ENCODE measurements at regions of chr10 and their contacts with region 1.

Region 1: GRCh38 chr10:92087750-92088395 is 164.3 kb downstream of the BTAF1 start:
- DNase-seq: peak; percentile 90
- ATAC-seq: peak; percentile 100
- H3K4me3 ChIP-seq: no peak overlapping the region
- H3K27ac ChIP-seq: no peak overlapping the region
- H3K4me1 ChIP-seq: peaks cover 20% of the 10 kb centered on the region
- H3K27me3 ChIP-seq: no peaks in the 10 kb centered on the region
- CTCF ChIP-seq: peak; percentile 94
- EP300 ChIP-seq: no peak; a peak in 1 of 4 replicates
- POLR2A ChIP-seq: no peak
- RAD21 ChIP-seq: peak; percentile 95

Region 2: DNA sequence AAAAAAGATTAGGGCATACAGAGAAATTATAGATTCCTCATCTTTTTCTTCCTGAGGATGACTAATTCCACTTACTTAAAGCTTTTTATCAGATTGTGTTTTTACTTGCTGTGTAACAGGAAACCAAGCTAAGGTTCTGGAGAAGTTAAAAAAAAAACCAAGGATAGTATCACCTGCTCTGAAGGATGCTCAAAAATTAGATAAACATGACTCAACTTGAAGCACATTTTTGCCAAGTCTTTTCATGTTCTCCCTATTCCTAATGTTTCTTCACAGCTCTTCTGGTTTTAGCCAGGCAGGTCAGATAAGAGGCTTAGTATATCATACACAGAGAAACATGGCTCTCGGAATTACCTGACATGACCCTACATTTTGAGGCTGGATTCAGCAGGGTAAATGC is 112.7 kb after region 1 on chr10:
- CTCF ChIA-PET with region 1: no interaction called
- POLR2A ChIA-PET with region 1: interaction called, 3 read pairs
- in situ Hi-C with region 1: no loop called
- intact Hi-C with region 1: loop called (anchors 10 kb)
- DNase-seq: no peak
- ATAC-seq: no peak
- H3K4me3 ChIP-seq: no peak overlapping the region
- H3K27ac ChIP-seq: no peak overlapping the region
- H3K4me1 ChIP-seq: 0 out of 2 replicates have a peak, but pooled peaks cover 6% of the 10 kb centered on the region
- H3K27me3 ChIP-seq: no peaks in the 10 kb centered on the region
- CTCF ChIP-seq: no peak
- EP300 ChIP-seq: no peak
- POLR2A ChIP-seq: no peak
- RAD21 ChIP-seq: no peak

Region 3: DNA sequence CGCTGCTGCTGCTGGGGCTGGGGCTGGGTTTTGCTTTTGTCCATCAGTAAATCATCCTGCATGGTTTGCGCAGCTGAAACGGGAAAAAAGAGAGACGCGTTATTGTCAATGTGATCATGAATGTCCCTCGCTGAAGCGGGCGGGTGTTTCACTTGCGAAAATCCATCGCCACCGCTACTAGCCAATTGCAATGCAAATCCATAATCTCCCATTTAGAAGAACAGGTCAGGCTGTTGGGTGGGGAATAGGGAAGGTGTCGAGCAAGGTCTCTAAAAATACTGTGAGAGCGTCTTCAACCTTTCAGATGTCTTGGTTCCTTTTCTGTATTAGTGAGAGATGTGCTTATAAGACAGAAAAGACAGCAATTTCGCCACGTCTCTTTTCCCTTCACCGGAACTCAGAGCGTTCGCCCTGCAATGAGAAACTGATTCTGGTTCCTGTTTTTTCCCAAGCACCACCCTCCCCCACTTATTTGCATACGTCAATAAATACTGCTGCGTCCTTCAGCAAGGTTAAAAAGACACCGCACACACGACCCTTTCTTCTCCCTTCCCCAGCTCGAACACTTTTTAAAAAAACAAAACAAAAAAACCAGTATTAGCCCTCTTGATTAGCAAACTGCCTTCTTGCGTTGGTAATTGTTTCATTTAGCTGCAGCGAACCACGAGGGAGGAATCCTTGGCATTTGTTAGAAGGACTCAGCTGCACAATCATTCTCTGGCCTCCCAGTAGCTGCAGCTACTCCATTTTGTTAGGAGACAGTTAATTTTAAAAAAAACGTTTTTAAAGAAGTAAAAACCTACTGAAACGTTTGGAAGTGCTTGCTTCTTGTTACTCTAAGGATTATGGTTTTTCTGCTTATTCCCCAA is 152.7 kb after region 1 on chr10:
- CTCF ChIA-PET with region 1: no interaction called
- POLR2A ChIA-PET with region 1: no interaction called
- in situ Hi-C with region 1: no loop called
- intact Hi-C with region 1: loop called (anchors 1 kb)
- DNase-seq: peak; percentile 75
- ATAC-seq: peak; percentile 76
- H3K4me3 ChIP-seq: peak overlapping the region; percentile 78 to 91 (median 89)
- H3K27ac ChIP-seq: peak overlapping the region; percentile 92
- H3K4me1 ChIP-seq: peaks cover 44% of the 10 kb centered on the region
- H3K27me3 ChIP-seq: no peaks in the 10 kb centered on the region
- CTCF ChIP-seq: no peak
- EP300 ChIP-seq: no peak; a peak in 2 of 4 replicates
- POLR2A ChIP-seq: peak; percentile 66 to 81; a peak in 2 of 4 replicates
- RAD21 ChIP-seq: no peak

Measured in HepG2 (cell line).